ENCODE measurements at regions of chr11 and their contacts with region 1.

Region 1: GRCh38 chr11:68632802-68633201 is 51.5 kb upstream of the GAL start:
- DNase-seq: peak; percentile 68
- H3K4me3 ChIP-seq: no peak overlapping the region
- H3K27ac ChIP-seq: no peak overlapping the region
- H3K4me1 ChIP-seq: no peaks in the 10 kb centered on the region
- H3K27me3 ChIP-seq: peaks cover 0 to 3% of the 10 kb centered on the region in 2 experiments
- CTCF ChIP-seq: peak; percentile 66 to 69
- POLR2A ChIP-seq: no peak

Region 2: DNA sequence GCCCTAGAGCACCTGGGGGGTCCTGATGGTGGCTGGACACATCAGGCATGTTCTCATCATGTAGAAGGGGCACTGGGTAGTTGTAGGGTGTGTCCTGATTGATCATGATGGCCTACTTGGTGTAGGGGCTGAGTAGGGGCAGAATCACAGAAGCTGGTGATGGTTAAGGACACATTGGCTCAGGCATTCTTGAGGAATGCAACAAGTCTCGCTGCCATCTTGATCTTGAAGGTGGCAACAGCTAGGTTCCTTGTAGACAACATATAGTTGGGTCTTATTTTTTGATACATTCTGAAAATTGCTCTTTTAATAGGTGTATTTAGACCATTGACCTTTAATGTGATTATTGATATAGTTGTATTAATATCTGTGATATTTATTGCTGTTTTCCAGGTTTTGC is 144.2 kb before region 1 on chr11:
- CTCF ChIA-PET with region 1: no interaction called
- POLR2A ChIA-PET with region 1: no interaction called
- dilution Hi-C with region 1: no loop called
- intact Hi-C with region 1: no loop called
- DNase-seq: no peak
- H3K4me3 ChIP-seq: no peak overlapping the region
- H3K27ac ChIP-seq: no peak overlapping the region
- H3K4me1 ChIP-seq: no peaks in the 10 kb centered on the region
- H3K27me3 ChIP-seq: no peaks in the 10 kb centered on the region
- CTCF ChIP-seq: no peak
- POLR2A ChIP-seq: no peak

Region 3: DNA sequence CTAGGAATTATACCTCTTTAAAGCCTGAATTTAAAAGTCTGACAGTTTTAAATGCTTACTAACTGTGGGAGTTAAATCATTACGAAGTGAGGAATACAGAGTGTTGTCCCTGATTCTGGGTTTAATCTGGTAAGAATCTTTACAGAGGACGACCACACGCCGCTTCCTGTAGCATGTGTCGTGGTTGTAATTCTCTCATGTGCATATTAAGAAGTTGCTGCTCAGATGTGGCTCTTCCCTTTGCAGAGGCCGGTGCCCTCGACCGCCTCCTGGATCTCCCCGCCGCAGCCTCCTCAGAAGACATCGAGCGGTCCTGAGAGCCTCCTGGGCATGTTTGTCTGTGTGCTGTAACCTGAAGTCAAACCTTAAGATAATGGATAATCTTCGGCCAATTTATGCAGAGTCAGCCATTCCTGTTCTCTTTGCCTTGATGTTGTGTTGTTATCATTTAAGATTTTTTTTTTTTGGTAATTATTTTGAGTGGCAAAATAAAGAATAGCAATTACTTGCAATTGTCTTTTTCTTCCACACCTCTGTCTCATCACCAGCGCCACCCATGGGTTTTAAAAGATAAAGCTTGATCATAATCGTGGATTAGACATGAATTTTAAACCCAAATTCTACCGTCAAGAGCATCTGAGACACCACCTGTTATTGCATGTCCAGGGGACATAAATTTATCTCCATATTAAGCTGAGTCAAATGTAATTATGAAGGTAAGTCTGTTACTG is 58.0 kb after region 1 on chr11:
- CTCF ChIA-PET with region 1: interaction called, 10 read pairs
- POLR2A ChIA-PET with region 1: no interaction called
- dilution Hi-C with region 1: no loop called
- intact Hi-C with region 1: no loop called
- DNase-seq: no peak
- H3K4me3 ChIP-seq: no peak overlapping the region
- H3K27ac ChIP-seq: no peak overlapping the region
- H3K4me1 ChIP-seq: no peaks in the 10 kb centered on the region
- H3K27me3 ChIP-seq: peaks cover 0 to 12% of the 10 kb centered on the region in 2 experiments
- CTCF ChIP-seq: no peak
- POLR2A ChIP-seq: no peak

Region 4: GRCh38 chr11:68727785-68728184 is 95.0 kb after region 1 on chr11:
- CTCF ChIA-PET with region 1: interaction called, 10 read pairs
- POLR2A ChIA-PET with region 1: no interaction called
- dilution Hi-C with region 1: no loop called
- intact Hi-C with region 1: no loop called
- DNase-seq: peak; percentile 14
- H3K4me3 ChIP-seq: no peak overlapping the region
- H3K27ac ChIP-seq: no peak overlapping the region
- H3K4me1 ChIP-seq: no peaks in the 10 kb centered on the region
- H3K27me3 ChIP-seq: peaks cover 28 to 35% of the 10 kb centered on the region in 2 experiments
- CTCF ChIP-seq: no peak
- POLR2A ChIP-seq: no peak

Region 5: DNA sequence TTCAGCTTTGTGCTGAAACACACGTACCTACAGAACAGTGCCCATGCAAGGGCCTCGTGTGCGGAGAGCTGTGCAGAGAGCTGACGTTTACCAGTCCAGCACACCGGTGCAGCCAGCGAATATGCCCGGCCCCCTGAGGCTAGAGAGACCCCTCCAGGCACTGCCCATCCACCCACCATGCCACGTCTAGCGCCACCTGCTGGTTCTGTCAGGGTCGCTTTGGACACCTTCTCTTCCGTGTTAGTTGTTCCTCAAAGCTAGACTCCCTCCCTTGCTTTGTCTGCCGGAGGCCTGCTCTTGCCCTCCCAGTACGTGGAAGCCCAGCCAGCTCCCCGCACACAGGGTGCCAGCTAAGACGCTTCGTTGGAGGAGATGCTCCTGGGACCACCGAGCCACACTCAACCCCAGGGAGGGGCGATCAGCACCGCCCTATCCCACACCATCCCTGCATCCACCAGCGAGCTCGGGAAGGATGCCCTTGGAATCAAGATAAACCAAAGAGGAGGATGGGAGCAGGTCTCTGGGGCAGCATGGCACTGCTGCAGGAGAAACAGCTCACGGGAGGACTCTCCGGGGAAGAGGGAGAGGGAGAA is 165.5 kb after region 1 on chr11:
- CTCF ChIA-PET with region 1: interaction called, 45 read pairs
- POLR2A ChIA-PET with region 1: no interaction called
- dilution Hi-C with region 1: no loop called
- intact Hi-C with region 1: loop called (anchors 2 kb)
- DNase-seq: peak; percentile 10
- H3K4me3 ChIP-seq: no peak overlapping the region
- H3K27ac ChIP-seq: no peak overlapping the region
- H3K4me1 ChIP-seq: no peaks in the 10 kb centered on the region
- H3K27me3 ChIP-seq: no peaks in the 10 kb centered on the region
- CTCF ChIP-seq: peak; percentile 72
- POLR2A ChIP-seq: no peak

Region 6: DNA sequence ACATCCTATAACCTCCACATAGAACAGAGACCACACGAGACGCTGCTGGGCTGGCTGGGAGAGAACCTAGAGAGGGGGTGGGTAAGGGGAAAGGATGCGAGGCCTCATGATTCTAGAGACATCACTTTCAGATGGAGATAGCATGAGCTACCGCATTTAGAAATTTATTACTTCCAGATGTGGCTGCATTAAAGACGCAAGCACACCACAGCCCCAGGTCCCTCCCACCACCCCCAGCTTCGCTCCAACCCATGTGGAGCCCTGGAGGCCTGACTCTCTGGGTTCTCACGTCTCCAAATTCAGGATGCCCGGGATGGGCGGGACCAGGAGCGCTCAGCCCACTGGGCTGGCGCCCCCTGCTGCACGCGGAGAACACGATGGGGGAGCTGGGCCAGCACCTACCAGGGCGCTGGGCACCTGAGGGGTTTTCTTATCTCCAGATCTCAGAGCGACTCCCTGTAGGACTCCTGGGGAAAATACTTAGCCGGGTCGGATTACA is 257.2 kb after region 1 on chr11:
- CTCF ChIA-PET with region 1: interaction called, 11 read pairs
- POLR2A ChIA-PET with region 1: no interaction called
- dilution Hi-C with region 1: no loop called
- intact Hi-C with region 1: no loop called
- DNase-seq: no peak
- H3K4me3 ChIP-seq: no peak overlapping the region
- H3K27ac ChIP-seq: no peak overlapping the region
- H3K4me1 ChIP-seq: peaks cover 15% of the 10 kb centered on the region
- H3K27me3 ChIP-seq: no peaks in the 10 kb centered on the region
- CTCF ChIP-seq: peak; percentile 26 to 43
- POLR2A ChIP-seq: peak; percentile 19

Region 7: DNA sequence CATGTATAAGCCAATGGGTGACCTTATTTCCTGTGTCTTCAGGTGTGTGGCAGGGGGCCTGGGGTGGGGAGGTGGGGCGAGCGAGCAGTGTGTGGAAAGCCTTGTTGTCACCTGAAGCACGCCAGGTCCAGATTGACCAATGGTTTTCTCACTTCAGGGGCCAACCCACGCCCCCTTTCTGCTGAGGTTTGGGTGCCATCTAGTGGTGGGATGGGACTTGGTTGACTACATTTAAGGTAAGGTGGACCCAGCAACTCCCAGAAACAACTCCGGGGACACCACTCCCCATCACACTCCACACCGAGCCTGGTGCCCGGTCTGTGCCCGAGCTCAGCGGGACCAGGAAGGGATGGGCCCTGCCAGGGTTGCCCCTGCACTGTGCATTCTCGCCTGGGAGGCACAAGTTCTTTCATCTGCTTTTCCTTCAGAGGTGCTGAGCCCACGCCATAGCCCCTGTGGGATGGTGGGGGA is 455.9 kb after region 1 on chr11:
- CTCF ChIA-PET with region 1: interaction called, 8 read pairs
- POLR2A ChIA-PET with region 1: no interaction called
- dilution Hi-C with region 1: no loop called
- intact Hi-C with region 1: loop called (anchors 2 kb)
- DNase-seq: peak; percentile 76
- H3K4me3 ChIP-seq: no peak overlapping the region
- H3K27ac ChIP-seq: no peak overlapping the region
- H3K4me1 ChIP-seq: no peaks in the 10 kb centered on the region
- H3K27me3 ChIP-seq: no peaks in the 10 kb centered on the region
- CTCF ChIP-seq: peak; percentile 72 to 75
- POLR2A ChIP-seq: no peak

Region 8: GRCh38 chr11:69122642-69123431 is 490.0 kb after region 1 on chr11:
- CTCF ChIA-PET with region 1: no interaction called
- POLR2A ChIA-PET with region 1: no interaction called
- dilution Hi-C with region 1: no loop called
- intact Hi-C with region 1: no loop called
- DNase-seq: peak; percentile 64
- H3K4me3 ChIP-seq: no peak overlapping the region
- H3K27ac ChIP-seq: no peak overlapping the region
- H3K4me1 ChIP-seq: peaks cover 18% of the 10 kb centered on the region
- H3K27me3 ChIP-seq: no peaks in the 10 kb centered on the region
- CTCF ChIP-seq: no peak
- POLR2A ChIP-seq: no peak